IMR-90 (cell line): ENCODE measurements at regions of chr3 and their contacts with region 1.

Region 1: GRCh38 chr3:66276705-66277274 is 56.0 kb downstream of the SLC25A26 start:
- DNase-seq: peak; percentile 85
- ATAC-seq: peak; percentile 71
- H3K4me3 ChIP-seq: no peak overlapping the region
- H3K27ac ChIP-seq: no peak overlapping the region
- H3K4me1 ChIP-seq: peaks cover 4% of the 10 kb centered on the region
- H3K27me3 ChIP-seq: no peaks in the 10 kb centered on the region
- CTCF ChIP-seq: peak; percentile 82
- POLR2A ChIP-seq: no peak
- RAD21 ChIP-seq: peak; percentile 87

Region 2: GRCh38 chr3:66372681-66373350 is 96.0 kb after region 1 on chr3:
- CTCF ChIA-PET with region 1: interaction called, 3 read pairs
- POLR2A ChIA-PET with region 1: no interaction called
- dilution Hi-C with region 1: no loop called
- in situ Hi-C with region 1: no loop called
- intact Hi-C with region 1: loop called (anchors 1 kb)
- DNase-seq: peak; percentile 20
- ATAC-seq: peak; percentile 46
- H3K4me3 ChIP-seq: no peak overlapping the region
- H3K27ac ChIP-seq: no peak overlapping the region
- H3K4me1 ChIP-seq: peaks cover 3% of the 10 kb centered on the region
- H3K27me3 ChIP-seq: no peaks in the 10 kb centered on the region
- CTCF ChIP-seq: peak; percentile 38
- POLR2A ChIP-seq: no peak
- RAD21 ChIP-seq: peak; percentile 46

Region 3: GRCh38 chr3:66500576-66501482 is 224.0 kb after region 1 on chr3 and contains the start of gene LRIG1:
- CTCF ChIA-PET with region 1: no interaction called
- POLR2A ChIA-PET with region 1: no interaction called
- dilution Hi-C with region 1: no loop called
- in situ Hi-C with region 1: loop called (anchors 10 kb)
- intact Hi-C with region 1: loop called (anchors 2 kb)
- DNase-seq: peak; percentile 97
- ATAC-seq: peak; percentile 96
- H3K4me3 ChIP-seq: peak within 1 kb of the TSS; percentile 97
- H3K27ac ChIP-seq: peak within 1 kb of the TSS; percentile 95
- H3K4me1 ChIP-seq: peaks cover 1% of the 10 kb centered on the region
- H3K27me3 ChIP-seq: peaks cover 3% of the 10 kb centered on the region; the same call in 1 of the 2 replicates
- CTCF ChIP-seq: peak; percentile 38
- POLR2A ChIP-seq: peak; percentile 92
- RAD21 ChIP-seq: peak; percentile 31
- total RNA-seq, gene LRIG1: 69.2 and 87.8 TPM in 2 replicates

Region 4: DNA sequence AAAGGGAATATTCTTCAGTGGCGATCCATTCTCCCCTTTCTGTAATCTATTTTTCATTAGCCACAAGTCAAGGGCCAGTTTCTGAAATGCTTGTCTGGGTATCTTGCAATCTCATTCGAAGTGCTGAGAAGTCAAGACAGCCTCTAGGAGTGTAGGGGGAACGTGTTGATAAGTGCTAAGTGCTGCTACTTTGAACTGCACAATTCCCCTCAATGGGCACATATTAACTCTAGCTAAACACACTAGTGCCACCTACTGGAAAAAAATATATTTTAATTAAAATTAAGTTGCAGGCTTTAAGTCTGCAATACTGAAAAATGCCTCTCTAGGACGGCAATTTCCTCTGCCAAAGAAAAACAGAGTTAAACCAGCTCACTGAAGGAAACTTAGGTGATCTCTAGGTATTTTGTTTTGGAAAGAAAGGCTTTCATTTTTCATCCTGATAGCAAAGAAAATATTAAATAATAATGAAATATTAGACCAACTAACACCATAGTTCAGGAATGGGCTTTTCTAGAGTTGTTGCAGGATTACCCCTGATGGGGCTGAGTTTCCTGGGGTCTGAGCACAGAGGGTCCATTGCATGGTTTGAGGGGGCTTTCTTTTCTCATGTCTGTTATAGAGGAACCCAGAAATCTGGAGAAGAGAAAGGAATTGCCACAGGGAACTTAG is 539.4 kb after region 1 on chr3:
- CTCF ChIA-PET with region 1: interaction called, 11 read pairs
- POLR2A ChIA-PET with region 1: no interaction called
- dilution Hi-C with region 1: no loop called
- in situ Hi-C with region 1: loop called (anchors 5 kb)
- intact Hi-C with region 1: loop called (anchors 1 kb)
- DNase-seq: peak; percentile 83
- ATAC-seq: peak; percentile 91
- H3K4me3 ChIP-seq: no peak overlapping the region
- H3K27ac ChIP-seq: no peak overlapping the region
- H3K4me1 ChIP-seq: no peaks in the 10 kb centered on the region
- H3K27me3 ChIP-seq: peaks cover 5% of the 10 kb centered on the region
- CTCF ChIP-seq: peak; percentile 73
- POLR2A ChIP-seq: no peak
- RAD21 ChIP-seq: peak; percentile 92

Region 5: GRCh38 chr3:66836363-66837152 is 559.8 kb after region 1 on chr3:
- CTCF ChIA-PET with region 1: no interaction called
- POLR2A ChIA-PET with region 1: no interaction called
- dilution Hi-C with region 1: no loop called
- in situ Hi-C with region 1: no loop called
- intact Hi-C with region 1: loop called (anchors 1 kb)
- DNase-seq: peak; percentile 31
- ATAC-seq: peak; percentile 78
- H3K4me3 ChIP-seq: no peak overlapping the region
- H3K27ac ChIP-seq: no peak overlapping the region
- H3K4me1 ChIP-seq: no peaks in the 10 kb centered on the region
- H3K27me3 ChIP-seq: peaks cover 3% of the 10 kb centered on the region; the same call in 1 of the 2 replicates
- CTCF ChIP-seq: peak; percentile 50
- POLR2A ChIP-seq: no peak
- RAD21 ChIP-seq: peak; percentile 58